ENCODE measurements at regions of chr3 and their contacts with region 1.

Region 1: GRCh38 chr3:53696401-53697150 is 149.6 kb downstream of the CHDH start:
- DNase-seq: no peak
- H3K4me3 ChIP-seq: no peak overlapping the region
- H3K27ac ChIP-seq: no peak overlapping the region
- H3K4me1 ChIP-seq: no peaks in the 10 kb centered on the region
- H3K27me3 ChIP-seq: no peaks in the 10 kb centered on the region
- CTCF ChIP-seq: no peak
- EP300 ChIP-seq: no peak
- POLR2A ChIP-seq: no peak

Region 2: GRCh38 chr3:53347261-53348064 is 349.1 kb before region 1 on chr3 and contains the start of gene DCP1A:
- intact Hi-C with region 1: loop called in 1 of 4 experiments (anchors 1 kb)
- DNase-seq: peak; percentile 94 to 97 (median 95)
- H3K4me3 ChIP-seq: peak within 1 kb of the TSS; percentile 80
- H3K27ac ChIP-seq: peak within 1 kb of the TSS; percentile 89 to 93
- H3K4me1 ChIP-seq: peaks cover 2% of the 10 kb centered on the region
- H3K27me3 ChIP-seq: no peaks in the 10 kb centered on the region
- CTCF ChIP-seq: no peak
- EP300 ChIP-seq: no peak
- POLR2A ChIP-seq: peak; percentile 76
- total RNA-seq, gene DCP1A: 16.7 to 34.1 (median 27.1) TPM

Region 3: GRCh38 chr3:53464424-53464823 is 232.2 kb before region 1 on chr3:
- intact Hi-C with region 1: no loop called
- DNase-seq: no peak
- H3K4me3 ChIP-seq: no peak overlapping the region
- H3K27ac ChIP-seq: no peak overlapping the region
- H3K4me1 ChIP-seq: no peaks in the 10 kb centered on the region
- H3K27me3 ChIP-seq: no peaks in the 10 kb centered on the region
- CTCF ChIP-seq: no peak
- EP300 ChIP-seq: no peak
- POLR2A ChIP-seq: no peak

Region 4: DNA sequence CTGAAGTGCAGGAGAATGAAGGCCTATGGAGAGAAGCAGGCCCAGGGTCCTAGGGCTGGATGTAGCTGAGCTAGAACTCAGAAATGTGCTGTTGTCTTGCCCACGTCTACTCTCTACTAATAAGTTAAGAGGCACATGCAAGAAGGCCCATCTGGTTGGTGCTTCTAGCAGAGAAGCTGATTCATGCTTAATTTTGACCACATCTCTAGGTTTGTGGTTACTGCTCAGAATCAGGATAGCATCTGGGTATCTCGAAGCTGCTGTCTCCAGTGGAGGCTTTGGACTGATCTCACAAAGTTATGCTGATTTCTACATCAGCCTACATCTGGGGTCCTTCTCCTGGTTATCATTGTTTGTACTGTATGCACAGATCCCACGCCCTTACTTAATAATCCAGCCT is 114.9 kb before region 1 on chr3:
- intact Hi-C with region 1: no loop called
- DNase-seq: no peak
- H3K4me3 ChIP-seq: no peak overlapping the region
- H3K27ac ChIP-seq: no peak overlapping the region
- H3K4me1 ChIP-seq: no peaks in the 10 kb centered on the region
- H3K27me3 ChIP-seq: no peaks in the 10 kb centered on the region
- CTCF ChIP-seq: no peak
- EP300 ChIP-seq: no peak
- POLR2A ChIP-seq: no peak

Measured in ovary (tissue), 10 donors.